B cell (primary cell): ENCODE measurements at regions of chr7 and their contacts with region 1.

Region 1: GRCh38 chr7:140924019-140924820 is 509 bp downstream of the BRAF start:
- DNase-seq: peak; percentile 97
- ATAC-seq: peak; percentile 74
- H3K4me3 ChIP-seq: peak overlapping the region; percentile 73 to 92 (median 92)
- H3K4me3 Mint-ChIP-seq: no peak overlapping the region
- H3K27ac ChIP-seq: peak overlapping the region; percentile 93 to 98
- H3K27ac Mint-ChIP-seq: no peak overlapping the region
- H3K4me1 ChIP-seq: peaks cover 16 to 27% of the 10 kb centered on the region in 2 donors
- H3K4me1 Mint-ChIP-seq: peaks cover 21% of the 10 kb centered on the region
- H3K27me3 ChIP-seq: no peaks in the 10 kb centered on the region
- H3K27me3 Mint-ChIP-seq: no peaks in the 10 kb centered on the region
- CTCF ChIP-seq: peak; percentile 48

Region 2: DNA sequence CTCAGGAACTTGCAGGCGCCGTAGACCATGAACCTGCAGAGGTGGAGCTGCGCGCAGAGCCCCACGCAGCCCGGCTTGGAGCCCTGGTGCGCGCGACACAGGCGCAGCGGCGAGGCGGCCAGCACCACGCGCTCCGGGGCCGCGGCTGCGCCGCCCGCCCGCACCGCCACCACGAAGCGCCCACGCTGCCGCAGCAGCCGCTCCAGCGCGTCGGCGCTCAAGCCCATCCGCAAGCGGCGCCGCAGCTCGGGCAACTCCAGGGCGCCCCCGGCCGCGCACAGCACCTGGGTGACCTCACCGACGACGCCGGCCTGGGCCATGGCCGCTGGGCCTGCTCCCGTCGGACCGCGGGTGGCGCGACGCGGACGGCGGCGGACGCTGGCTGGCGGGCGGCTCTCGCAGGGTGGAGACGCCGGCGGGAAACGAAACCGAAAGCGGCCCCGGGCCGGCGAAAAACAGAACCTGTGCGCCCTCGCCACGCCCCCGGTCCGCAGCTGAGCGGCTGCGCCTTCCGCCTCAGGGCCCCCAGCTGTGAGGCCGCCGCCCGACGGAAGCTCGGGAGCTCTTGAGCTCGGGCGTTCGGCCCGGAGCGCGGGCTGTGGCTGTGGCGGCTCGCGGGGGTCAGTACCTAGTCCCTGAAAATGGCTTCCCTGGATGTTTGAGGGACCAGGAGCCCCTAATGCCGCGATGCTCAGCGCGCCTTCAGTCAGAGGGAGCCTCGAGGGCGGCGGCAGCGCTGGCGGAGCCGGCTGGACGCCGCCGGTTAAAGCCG is 861.5 kb before region 1 on chr7 and contains the start of gene PARP12:
- CTCF ChIA-PET with region 1: no interaction called
- POLR2A ChIA-PET with region 1: no interaction called
- intact Hi-C with region 1: loop called (anchors 2 kb)
- DNase-seq: peak; percentile 96
- ATAC-seq: peak; percentile 86
- H3K4me3 ChIP-seq: peak within 1 kb of the TSS; percentile 67 to 89 (median 84)
- H3K4me3 Mint-ChIP-seq: peak within 1 kb of the TSS; percentile 98
- H3K27ac ChIP-seq: peak within 1 kb of the TSS; percentile 86 to 93
- H3K27ac Mint-ChIP-seq: peak within 1 kb of the TSS; percentile 99
- H3K4me1 ChIP-seq: peaks cover 32 to 38% of the 10 kb centered on the region in 2 donors
- H3K4me1 Mint-ChIP-seq: peaks cover 43% of the 10 kb centered on the region
- H3K27me3 ChIP-seq: no peaks in the 10 kb centered on the region
- H3K27me3 Mint-ChIP-seq: no peaks in the 10 kb centered on the region
- CTCF ChIP-seq: no peak
- total RNA-seq, gene PARP12: 160 and 177 TPM in 2 replicates

Region 3: DNA sequence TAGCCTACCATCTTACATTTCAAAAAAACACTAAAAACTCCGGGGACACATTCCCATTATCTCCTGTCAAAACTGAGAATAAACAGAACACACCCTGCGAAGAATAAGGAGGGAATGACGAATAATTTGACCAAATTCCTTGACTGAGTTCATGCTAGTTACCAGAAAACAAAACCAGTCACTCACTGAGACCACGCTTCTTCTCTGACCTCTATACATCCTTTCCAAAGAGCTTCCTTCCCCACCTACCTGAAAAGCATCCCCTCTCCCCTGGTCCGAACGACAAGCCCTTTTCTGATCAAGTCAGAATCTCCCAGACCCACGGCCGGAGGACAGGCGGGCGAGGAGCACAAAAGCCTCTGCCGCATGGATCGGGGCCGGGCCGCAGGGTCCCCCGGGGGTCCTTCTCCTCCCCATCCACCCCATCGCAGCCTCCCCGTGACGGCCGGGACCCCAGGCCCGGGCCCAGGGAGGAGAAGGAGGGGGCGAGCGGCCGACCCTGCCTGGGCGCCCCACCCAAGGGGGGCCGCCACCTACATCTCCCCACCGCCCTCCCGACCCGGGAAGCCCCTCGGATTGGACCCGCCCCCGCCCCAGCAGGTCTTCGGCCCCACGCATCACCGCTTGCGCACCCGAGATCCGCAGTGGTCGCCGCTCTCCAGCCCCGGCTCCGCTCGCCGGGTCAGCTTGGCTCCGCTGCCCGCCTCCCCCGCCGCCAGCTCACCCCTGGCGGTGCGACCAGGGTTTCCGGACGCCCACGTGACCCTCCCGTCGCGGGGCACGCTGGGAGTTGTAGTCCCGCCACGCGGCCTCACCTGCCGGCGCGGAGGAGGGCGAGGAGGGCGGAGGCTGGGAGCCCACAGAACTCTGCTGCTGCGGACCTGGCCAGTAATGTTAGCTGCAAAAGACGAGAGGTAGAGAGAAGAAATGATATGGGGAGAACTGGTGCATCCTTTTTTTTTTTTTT is 526.2 kb before region 1 on chr7 and contains the start of gene SLC37A3:
- CTCF ChIA-PET with region 1: no interaction called
- POLR2A ChIA-PET with region 1: no interaction called
- intact Hi-C with region 1: loop called (anchors 10 kb)
- DNase-seq: peak; percentile 86
- ATAC-seq: peak; percentile 97
- H3K4me3 ChIP-seq: peak within 1 kb of the TSS; percentile 62 to 69 (median 67)
- H3K4me3 Mint-ChIP-seq: peak within 1 kb of the TSS; percentile 98
- H3K27ac ChIP-seq: peak within 1 kb of the TSS in 1 of 2 donors; percentile 75
- H3K27ac Mint-ChIP-seq: peak within 1 kb of the TSS; percentile 83
- H3K4me1 ChIP-seq: peaks cover 7 to 11% of the 10 kb centered on the region in 2 donors
- H3K4me1 Mint-ChIP-seq: peaks cover 13% of the 10 kb centered on the region
- H3K27me3 ChIP-seq: no peaks in the 10 kb centered on the region
- H3K27me3 Mint-ChIP-seq: peaks cover 3% of the 10 kb centered on the region
- CTCF ChIP-seq: no peak
- total RNA-seq, gene SLC37A3: 20.1 TPM in 2 replicates

Region 4: GRCh38 chr7:140810830-140811556 is 113.2 kb before region 1 on chr7:
- CTCF ChIA-PET with region 1: interaction called, 5 read pairs
- POLR2A ChIA-PET with region 1: no interaction called
- intact Hi-C with region 1: loop called (anchors 1 kb)
- DNase-seq: peak; percentile 82
- ATAC-seq: peak; percentile 73
- H3K4me3 ChIP-seq: no peak overlapping the region
- H3K4me3 Mint-ChIP-seq: no peak overlapping the region
- H3K27ac ChIP-seq: no peak overlapping the region
- H3K27ac Mint-ChIP-seq: peak overlapping the region; percentile 17
- H3K4me1 ChIP-seq: no peaks in the 10 kb centered on the region
- H3K4me1 Mint-ChIP-seq: peaks cover 1% of the 10 kb centered on the region
- H3K27me3 ChIP-seq: no peaks in the 10 kb centered on the region
- H3K27me3 Mint-ChIP-seq: no peaks in the 10 kb centered on the region
- CTCF ChIP-seq: peak; percentile 82

Region 5: GRCh38 chr7:140876519-140877248 is 47.5 kb before region 1 on chr7:
- CTCF ChIA-PET with region 1: no interaction called
- POLR2A ChIA-PET with region 1: no interaction called
- intact Hi-C with region 1: no loop called
- DNase-seq: no peak
- ATAC-seq: no peak
- H3K4me3 ChIP-seq: no peak overlapping the region
- H3K4me3 Mint-ChIP-seq: no peak overlapping the region
- H3K27ac ChIP-seq: no peak overlapping the region
- H3K27ac Mint-ChIP-seq: no peak overlapping the region
- H3K4me1 ChIP-seq: peaks cover 0 to 3% of the 10 kb centered on the region in 2 donors
- H3K4me1 Mint-ChIP-seq: peaks cover 47% of the 10 kb centered on the region
- H3K27me3 ChIP-seq: no peaks in the 10 kb centered on the region
- H3K27me3 Mint-ChIP-seq: no peaks in the 10 kb centered on the region
- CTCF ChIP-seq: no peak

Region 6: GRCh38 chr7:140889645-140890044 is 34.6 kb before region 1 on chr7:
- CTCF ChIA-PET with region 1: no interaction called
- POLR2A ChIA-PET with region 1: no interaction called
- intact Hi-C with region 1: loop called (anchors 5 kb)
- DNase-seq: no peak
- ATAC-seq: no peak
- H3K4me3 ChIP-seq: no peak overlapping the region
- H3K4me3 Mint-ChIP-seq: no peak overlapping the region
- H3K27ac ChIP-seq: no peak overlapping the region
- H3K27ac Mint-ChIP-seq: no peak overlapping the region
- H3K4me1 ChIP-seq: peaks cover 7 to 31% of the 10 kb centered on the region in 2 donors
- H3K4me1 Mint-ChIP-seq: peaks cover 68% of the 10 kb centered on the region
- H3K27me3 ChIP-seq: no peaks in the 10 kb centered on the region
- H3K27me3 Mint-ChIP-seq: no peaks in the 10 kb centered on the region
- CTCF ChIP-seq: no peak

Region 7: DNA sequence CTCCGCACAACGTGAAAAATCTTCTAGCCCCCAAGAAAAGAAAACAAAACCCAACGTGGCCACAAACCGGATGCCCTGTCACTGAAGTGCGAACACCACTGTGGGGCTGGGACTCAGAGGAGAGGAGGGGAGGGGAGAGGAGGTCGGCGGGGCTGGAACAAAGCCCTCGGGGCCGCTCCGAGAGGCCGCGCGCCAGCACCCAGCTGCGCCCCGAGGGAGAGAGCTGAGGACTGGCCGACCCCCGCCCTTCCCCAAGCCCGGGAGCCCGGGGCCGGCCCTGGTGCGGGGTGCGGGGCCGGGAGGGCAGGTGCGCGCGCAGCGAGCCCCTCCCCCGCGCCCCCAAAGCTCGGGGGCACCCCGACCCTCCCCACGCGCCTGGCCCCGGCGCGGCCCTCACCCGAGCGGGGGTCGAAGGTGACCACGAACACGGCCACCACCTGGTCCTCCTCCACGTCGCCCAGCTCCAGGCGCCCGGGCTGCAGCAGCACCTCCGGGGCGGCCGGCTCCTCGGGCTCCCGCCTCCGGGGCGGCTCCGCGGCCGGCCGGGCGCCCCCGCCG is 777.3 kb after region 1 on chr7:
- CTCF ChIA-PET with region 1: no interaction called
- POLR2A ChIA-PET with region 1: no interaction called
- intact Hi-C with region 1: loop called (anchors 5 kb)
- DNase-seq: peak; percentile 83
- ATAC-seq: peak; percentile 86
- H3K4me3 ChIP-seq: peak overlapping the region in 4 of 5 experiments; percentile 47 to 78 (median 64)
- H3K4me3 Mint-ChIP-seq: peak overlapping the region; percentile 84
- H3K27ac ChIP-seq: peak overlapping the region; percentile 52 to 87
- H3K27ac Mint-ChIP-seq: peak overlapping the region; percentile 79
- H3K4me1 ChIP-seq: peaks cover 35 to 38% of the 10 kb centered on the region in 2 donors
- H3K4me1 Mint-ChIP-seq: peaks cover 56% of the 10 kb centered on the region
- H3K27me3 ChIP-seq: no peaks in the 10 kb centered on the region
- H3K27me3 Mint-ChIP-seq: no peaks in the 10 kb centered on the region
- CTCF ChIP-seq: no peak

Region 8: GRCh38 chr7:141737834-141738591 is 813.8 kb after region 1 on chr7 and contains the start of gene SSBP1:
- CTCF ChIA-PET with region 1: no interaction called
- POLR2A ChIA-PET with region 1: no interaction called
- intact Hi-C with region 1: loop called (anchors 2 kb)
- DNase-seq: peak; percentile 97
- ATAC-seq: peak; percentile 86
- H3K4me3 ChIP-seq: peak within 1 kb of the TSS; percentile 66 to 93 (median 90)
- H3K4me3 Mint-ChIP-seq: peak within 1 kb of the TSS; percentile 95
- H3K27ac ChIP-seq: peak within 1 kb of the TSS; percentile 84 to 92
- H3K27ac Mint-ChIP-seq: peak within 1 kb of the TSS; percentile 97
- H3K4me1 ChIP-seq: peaks cover 19 to 20% of the 10 kb centered on the region in 2 donors
- H3K4me1 Mint-ChIP-seq: peaks cover 37% of the 10 kb centered on the region
- H3K27me3 ChIP-seq: no peaks in the 10 kb centered on the region
- H3K27me3 Mint-ChIP-seq: no peaks in the 10 kb centered on the region
- CTCF ChIP-seq: peak; percentile 92
- total RNA-seq, gene SSBP1: 89.1 and 93.6 TPM in 2 replicates